ENCODE measurements at regions of chr6 and their contacts with region 1.

Region 1: DNA sequence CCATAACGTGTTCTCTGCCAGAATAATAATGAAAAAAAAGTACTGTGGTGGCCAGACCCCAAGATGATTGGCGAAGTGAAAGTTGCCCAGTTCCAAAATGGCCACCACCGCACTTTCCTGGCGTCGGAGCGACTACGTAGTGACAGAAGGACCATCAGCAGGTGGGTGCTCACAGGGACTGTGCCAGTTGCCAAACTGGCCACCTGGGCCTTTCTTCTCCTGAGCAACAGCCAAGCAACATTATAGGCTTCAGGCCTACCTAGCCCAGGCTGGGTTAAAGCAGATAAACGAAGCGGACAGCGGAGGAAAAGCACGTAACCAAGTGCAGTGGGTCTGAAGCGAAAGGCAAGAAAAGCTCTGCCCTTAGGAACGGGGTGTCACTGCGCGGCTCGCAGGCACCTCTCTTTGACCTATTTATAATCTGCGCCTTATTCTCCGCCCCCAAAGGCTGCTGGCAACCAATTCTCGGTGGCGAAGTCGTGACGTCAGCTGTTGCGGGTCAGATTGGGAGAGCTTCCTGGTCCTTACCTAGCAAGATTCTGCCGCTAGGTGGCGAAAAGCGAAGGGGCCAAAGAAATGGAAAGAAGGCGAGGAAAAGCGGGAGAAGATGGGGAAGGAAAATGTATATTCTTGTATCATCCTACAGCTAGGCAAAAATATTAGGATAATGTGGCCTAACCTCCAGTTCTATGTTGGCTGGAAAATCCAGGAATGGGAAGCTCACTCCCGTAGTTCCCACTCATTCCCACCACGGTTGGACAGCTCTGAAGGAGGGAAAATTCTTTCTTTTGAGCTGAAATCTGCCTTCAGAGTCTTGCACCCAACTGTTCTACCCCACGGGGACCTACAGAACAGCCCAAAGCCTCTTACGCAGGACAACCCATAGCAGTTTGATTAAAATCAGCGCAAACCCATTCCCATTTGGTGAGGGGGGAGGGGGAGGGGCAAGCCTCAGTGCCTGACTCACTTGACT is 6.9 kb upstream of the MOG start:
- DNase-seq: peak; percentile 94 to 99 (median 98)
- ATAC-seq: peak; percentile 93
- H3K4me3 ChIP-seq: peak overlapping the region; percentile 69
- H3K4me3 Mint-ChIP-seq: peak overlapping the region; percentile 92
- H3K27ac ChIP-seq: peak overlapping the region; percentile 85 to 94
- H3K27ac Mint-ChIP-seq: peak overlapping the region; percentile 99
- H3K4me1 ChIP-seq: peaks cover 16% of the 10 kb centered on the region
- H3K4me1 Mint-ChIP-seq: peaks cover 16% of the 10 kb centered on the region
- H3K27me3 ChIP-seq: peaks cover 0 to 1% of the 10 kb centered on the region in 2 experiments
- H3K27me3 Mint-ChIP-seq: no peaks in the 10 kb centered on the region
- CTCF ChIP-seq: peak; percentile 98

Region 2: DNA sequence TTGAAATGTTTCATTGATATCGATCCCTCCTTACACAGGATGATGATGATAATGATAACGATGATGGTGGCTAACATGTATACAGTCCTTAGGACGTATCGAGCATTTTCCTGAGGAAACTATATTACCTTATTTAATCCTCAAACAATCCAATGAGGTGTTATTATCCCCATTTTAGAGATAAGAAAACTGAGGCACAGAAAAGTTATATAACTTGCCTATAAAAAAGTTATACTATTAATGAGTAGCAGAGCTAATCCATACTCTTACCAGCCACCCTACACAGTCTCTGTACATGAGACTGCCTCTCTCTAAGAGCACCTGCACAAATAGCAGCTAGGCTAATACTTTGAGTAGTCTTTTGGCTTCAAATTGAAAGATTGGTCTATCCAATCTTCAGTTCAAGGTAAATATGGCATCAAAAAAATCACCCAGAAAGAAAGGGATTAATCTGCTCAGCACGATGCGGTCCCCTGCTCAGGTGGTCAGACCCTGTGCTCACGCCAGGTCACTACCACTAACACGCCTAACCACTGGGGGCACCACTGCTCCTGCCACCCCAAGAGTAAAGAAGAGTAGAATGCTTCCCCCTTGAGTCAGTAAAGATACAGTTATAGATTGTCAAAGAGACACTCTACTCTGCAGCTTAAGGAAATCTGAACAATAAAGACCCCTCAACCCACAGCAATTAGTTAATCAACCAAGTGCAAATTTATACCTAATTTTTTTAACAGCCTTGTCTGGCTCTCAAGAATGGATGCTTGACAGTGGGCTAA is 32.0 kb before region 1 on chr6:
- CTCF ChIA-PET with region 1: interaction called, 6 read pairs
- POLR2A ChIA-PET with region 1: interaction called, 4 read pairs
- intact Hi-C with region 1: loop called in 1 of 2 experiments (anchors 5 kb)
- DNase-seq: peak in 2 of 14 experiments; percentile 15 to 16
- ATAC-seq: no peak
- H3K4me3 ChIP-seq: no peak overlapping the region
- H3K4me3 Mint-ChIP-seq: no peak overlapping the region
- H3K27ac ChIP-seq: no peak overlapping the region
- H3K27ac Mint-ChIP-seq: no peak overlapping the region
- H3K4me1 ChIP-seq: no peaks in the 10 kb centered on the region
- H3K4me1 Mint-ChIP-seq: no peaks in the 10 kb centered on the region
- H3K27me3 ChIP-seq: no peaks in the 10 kb centered on the region
- H3K27me3 Mint-ChIP-seq: no peaks in the 10 kb centered on the region
- CTCF ChIP-seq: no peak

Region 3: DNA sequence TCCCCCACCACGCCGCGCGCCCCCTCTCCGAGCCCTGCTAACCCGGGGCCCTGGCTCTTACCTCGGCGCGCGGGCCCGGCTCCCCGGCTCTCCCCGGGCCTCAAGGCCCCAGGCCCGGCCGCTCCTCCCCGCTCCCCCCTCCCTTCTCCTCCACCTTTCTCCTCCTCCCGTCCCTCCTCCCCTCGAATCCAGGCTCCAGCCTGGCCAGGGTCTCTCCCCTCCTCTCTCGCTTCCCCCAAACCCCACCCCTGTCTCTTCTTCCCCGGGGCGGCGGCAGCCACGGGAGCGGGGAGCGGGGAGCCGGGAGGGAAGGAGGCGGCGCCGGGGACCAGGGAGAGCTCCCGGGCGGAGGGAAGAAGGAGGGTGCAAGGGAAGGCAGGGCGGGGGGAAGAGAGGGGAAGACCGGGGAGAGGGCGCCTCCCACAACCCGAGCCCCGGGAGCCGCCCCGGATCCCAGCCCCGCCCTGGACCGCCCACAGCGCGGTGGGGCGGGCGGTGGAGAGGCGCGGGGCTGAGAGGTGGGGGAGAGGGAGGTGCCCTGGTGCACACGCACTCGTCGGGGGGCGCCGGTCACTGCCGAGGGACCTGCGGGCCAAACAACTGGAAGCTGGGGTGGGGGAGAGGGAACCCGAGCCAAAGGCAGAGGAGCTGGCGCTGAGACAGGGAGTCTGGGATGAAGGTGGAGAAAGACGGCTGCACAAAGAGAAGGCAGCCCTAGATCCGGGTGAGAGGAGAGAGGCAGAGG is 17.0 kb before region 1 on chr6 and contains the start of gene GABBR1:
- CTCF ChIA-PET with region 1: interaction called, 45 read pairs
- POLR2A ChIA-PET with region 1: interaction called, 33 read pairs
- intact Hi-C with region 1: loop called in 1 of 2 experiments (anchors 1 kb)
- DNase-seq: peak; percentile 48 to 87 (median 70)
- ATAC-seq: peak; percentile 77
- H3K4me3 ChIP-seq: peak within 1 kb of the TSS; percentile 74
- H3K4me3 Mint-ChIP-seq: peak within 1 kb of the TSS; percentile 90
- H3K27ac ChIP-seq: peak within 1 kb of the TSS in 1 of 2 donors; percentile 56
- H3K27ac Mint-ChIP-seq: peak within 1 kb of the TSS; percentile 68
- H3K4me1 ChIP-seq: peaks cover 38% of the 10 kb centered on the region
- H3K4me1 Mint-ChIP-seq: peaks cover 55% of the 10 kb centered on the region
- H3K27me3 ChIP-seq: no peaks in the 10 kb centered on the region
- H3K27me3 Mint-ChIP-seq: no peaks in the 10 kb centered on the region
- CTCF ChIP-seq: no peak
- total RNA-seq, gene GABBR1: 78.4 to 79.9 TPM

Region 4: GRCh38 chr6:29665942-29666825 is 16.2 kb after region 1 on chr6:
- CTCF ChIA-PET with region 1: interaction called, 11 read pairs
- POLR2A ChIA-PET with region 1: interaction called, 5 read pairs
- intact Hi-C with region 1: no loop called
- DNase-seq: no peak
- ATAC-seq: no peak
- H3K4me3 ChIP-seq: no peak overlapping the region
- H3K4me3 Mint-ChIP-seq: no peak overlapping the region
- H3K27ac ChIP-seq: no peak overlapping the region
- H3K27ac Mint-ChIP-seq: no peak overlapping the region
- H3K4me1 ChIP-seq: no peaks in the 10 kb centered on the region
- H3K4me1 Mint-ChIP-seq: no peaks in the 10 kb centered on the region
- H3K27me3 ChIP-seq: peaks cover 19 to 25% of the 10 kb centered on the region in 2 experiments
- H3K27me3 Mint-ChIP-seq: peaks cover 63% of the 10 kb centered on the region
- CTCF ChIP-seq: no peak

Region 5: DNA sequence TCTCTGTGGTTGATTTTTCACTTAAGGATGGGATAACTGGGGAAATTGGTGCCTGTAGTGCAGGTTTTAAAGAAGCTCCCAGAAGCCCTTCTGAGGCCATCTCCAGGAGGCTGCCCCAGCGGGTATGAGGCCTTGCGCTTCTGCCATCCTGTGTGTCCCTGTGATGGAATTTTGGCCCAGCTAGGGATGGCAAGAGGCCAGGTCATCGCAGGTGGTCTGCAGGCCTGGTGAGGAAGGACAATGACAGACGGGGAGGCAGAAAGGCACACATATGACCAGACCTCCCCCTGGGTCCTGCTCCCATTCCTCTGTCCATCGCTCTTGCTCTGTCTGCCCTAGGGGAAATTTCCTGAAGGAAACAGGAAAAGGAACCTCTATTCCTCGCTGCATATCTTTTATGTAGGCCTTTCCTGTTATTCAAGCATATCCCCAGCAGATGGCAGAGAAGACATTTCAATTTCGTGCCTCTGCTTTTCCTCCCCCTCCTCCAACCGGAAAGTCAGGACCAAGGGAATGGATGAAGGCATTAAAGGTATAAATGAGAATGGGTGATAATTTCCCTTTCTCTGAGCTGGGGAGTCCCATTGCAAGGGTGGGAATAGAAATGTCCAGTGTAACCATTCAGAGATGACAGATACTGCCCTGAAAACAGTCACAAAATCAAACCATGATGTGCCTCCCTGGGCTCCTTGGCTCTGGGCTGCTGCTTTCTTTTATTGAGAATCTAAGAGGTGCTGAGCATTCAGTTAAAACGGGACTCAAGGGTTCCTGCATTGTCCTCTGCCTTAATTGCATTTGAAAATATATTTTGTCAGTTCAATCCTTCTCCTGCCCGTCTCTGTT is 55.6 kb after region 1 on chr6:
- CTCF ChIA-PET with region 1: interaction called, 8 read pairs
- POLR2A ChIA-PET with region 1: interaction called, 18 read pairs
- intact Hi-C with region 1: no loop called
- DNase-seq: peak in 4 of 14 experiments; percentile 29 to 70 (median 56)
- ATAC-seq: no peak
- H3K4me3 ChIP-seq: no peak overlapping the region
- H3K4me3 Mint-ChIP-seq: peak overlapping the region; percentile 63
- H3K27ac ChIP-seq: no peak overlapping the region
- H3K27ac Mint-ChIP-seq: peak overlapping the region; percentile 83
- H3K4me1 ChIP-seq: peaks cover 49% of the 10 kb centered on the region
- H3K4me1 Mint-ChIP-seq: peaks cover 57% of the 10 kb centered on the region
- H3K27me3 ChIP-seq: peaks cover 2 to 7% of the 10 kb centered on the region in 2 experiments
- H3K27me3 Mint-ChIP-seq: peaks cover 29% of the 10 kb centered on the region
- CTCF ChIP-seq: peak; percentile 90

Region 6: DNA sequence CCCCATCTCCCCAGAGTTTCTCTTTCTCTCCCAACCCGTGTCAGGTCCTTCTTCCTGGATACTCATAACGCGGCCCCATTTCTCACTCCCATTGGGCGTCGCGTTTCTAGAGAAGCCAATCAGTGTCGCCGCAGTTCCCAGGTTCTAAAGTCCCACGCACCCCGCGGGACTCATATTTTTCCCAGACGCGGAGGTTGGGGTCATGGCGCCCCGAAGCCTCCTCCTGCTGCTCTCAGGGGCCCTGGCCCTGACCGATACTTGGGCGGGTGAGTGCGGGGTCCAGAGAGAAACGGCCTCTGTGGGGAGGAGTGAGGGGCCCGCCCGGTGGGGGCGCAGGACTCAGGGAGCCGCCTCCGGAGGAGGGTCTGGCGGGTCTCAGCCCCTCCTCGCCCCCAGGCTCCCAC is 73.3 kb after region 1 on chr6 and contains the start of gene HLA-F:
- CTCF ChIA-PET with region 1: interaction called, 6 read pairs
- POLR2A ChIA-PET with region 1: interaction called, 5 read pairs
- intact Hi-C with region 1: loop called (anchors 5 kb)
- DNase-seq: peak in 13 of 14 experiments; percentile 69 to 96 (median 79)
- ATAC-seq: peak; percentile 90
- H3K4me3 ChIP-seq: peak within 1 kb of the TSS; percentile 100
- H3K4me3 Mint-ChIP-seq: peak within 1 kb of the TSS; percentile 97
- H3K27ac ChIP-seq: peak within 1 kb of the TSS; percentile 99 to 100
- H3K27ac Mint-ChIP-seq: peak within 1 kb of the TSS; percentile 95
- H3K4me1 ChIP-seq: peaks cover 63% of the 10 kb centered on the region
- H3K4me1 Mint-ChIP-seq: peaks cover 70% of the 10 kb centered on the region
- H3K27me3 ChIP-seq: no peaks in the 10 kb centered on the region
- H3K27me3 Mint-ChIP-seq: no peaks in the 10 kb centered on the region
- CTCF ChIP-seq: no peak
- total RNA-seq, gene HLA-F: 560 TPM

Region 7: GRCh38 chr6:29752451-29753308 is 102.7 kb after region 1 on chr6:
- CTCF ChIA-PET with region 1: interaction called, 11 read pairs
- POLR2A ChIA-PET with region 1: interaction called, 5 read pairs
- intact Hi-C with region 1: loop called in 1 of 2 experiments (anchors 5 kb)
- DNase-seq: peak; percentile 71 to 94 (median 79)
- ATAC-seq: peak; percentile 72
- H3K4me3 ChIP-seq: peak overlapping the region; percentile 75
- H3K4me3 Mint-ChIP-seq: peak overlapping the region; percentile 90
- H3K27ac ChIP-seq: peak overlapping the region; percentile 30 to 58
- H3K27ac Mint-ChIP-seq: peak overlapping the region; percentile 83
- H3K4me1 ChIP-seq: peaks cover 28% of the 10 kb centered on the region
- H3K4me1 Mint-ChIP-seq: peaks cover 42% of the 10 kb centered on the region
- H3K27me3 ChIP-seq: no peaks in the 10 kb centered on the region
- H3K27me3 Mint-ChIP-seq: no peaks in the 10 kb centered on the region
- CTCF ChIP-seq: peak; percentile 99

Region 8: DNA sequence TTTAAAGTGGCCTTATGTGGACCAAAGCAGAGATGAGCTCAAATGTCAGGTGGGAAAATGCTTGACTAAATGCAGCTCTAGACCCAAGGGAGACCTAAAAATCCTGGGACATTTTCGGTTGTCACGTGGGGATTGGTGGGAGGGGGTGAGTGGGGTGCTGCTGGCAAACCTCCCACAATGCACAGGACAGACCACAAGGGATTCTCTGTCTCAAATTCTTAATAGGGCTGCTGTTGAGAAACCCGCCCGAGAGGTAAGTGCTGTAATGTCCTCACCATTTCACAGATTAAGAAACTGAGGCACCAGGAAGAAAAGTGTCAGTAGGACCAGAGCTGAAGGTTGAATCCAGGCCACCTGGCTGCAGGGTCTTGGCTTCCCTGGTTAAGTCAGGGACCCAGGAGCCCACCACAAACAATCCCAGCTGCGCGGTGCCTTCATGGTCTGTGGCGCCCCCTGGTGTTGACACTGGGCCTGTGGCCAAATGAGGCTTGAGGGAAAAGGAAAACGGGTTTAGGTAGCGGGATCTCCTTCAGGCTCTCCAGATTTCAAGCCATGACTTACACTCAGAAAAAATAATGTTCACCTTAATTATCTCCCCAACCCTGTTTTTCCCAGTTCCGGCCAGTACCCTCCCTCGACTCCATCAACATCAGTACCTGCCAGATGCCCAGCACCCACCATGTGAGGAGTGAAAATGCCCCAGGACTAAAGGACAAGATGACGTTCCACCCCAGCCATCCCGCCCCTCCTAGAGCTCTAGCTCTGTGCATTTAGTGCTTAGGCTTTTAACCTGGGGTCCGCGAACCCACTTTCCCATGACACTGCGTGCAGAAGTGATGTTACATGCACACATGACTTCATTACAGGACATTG is 184.8 kb after region 1 on chr6:
- CTCF ChIA-PET with region 1: no interaction called
- POLR2A ChIA-PET with region 1: no interaction called
- intact Hi-C with region 1: no loop called
- DNase-seq: peak; percentile 30 to 74 (median 52)
- ATAC-seq: peak; percentile 54
- H3K4me3 ChIP-seq: no peak overlapping the region
- H3K4me3 Mint-ChIP-seq: no peak overlapping the region
- H3K27ac ChIP-seq: no peak overlapping the region
- H3K27ac Mint-ChIP-seq: no peak overlapping the region
- H3K4me1 ChIP-seq: peaks cover 6% of the 10 kb centered on the region
- H3K4me1 Mint-ChIP-seq: no peaks in the 10 kb centered on the region
- H3K27me3 ChIP-seq: peaks cover 14 to 30% of the 10 kb centered on the region in 2 experiments
- H3K27me3 Mint-ChIP-seq: peaks cover 75% of the 10 kb centered on the region
- CTCF ChIP-seq: peak; percentile 83